Activated B cell treated with CpG ODN at 0.5 μM for 24 hours (primary cell): ENCODE measurements at regions of chr9 and their contacts with region 1.

Region 1: DNA sequence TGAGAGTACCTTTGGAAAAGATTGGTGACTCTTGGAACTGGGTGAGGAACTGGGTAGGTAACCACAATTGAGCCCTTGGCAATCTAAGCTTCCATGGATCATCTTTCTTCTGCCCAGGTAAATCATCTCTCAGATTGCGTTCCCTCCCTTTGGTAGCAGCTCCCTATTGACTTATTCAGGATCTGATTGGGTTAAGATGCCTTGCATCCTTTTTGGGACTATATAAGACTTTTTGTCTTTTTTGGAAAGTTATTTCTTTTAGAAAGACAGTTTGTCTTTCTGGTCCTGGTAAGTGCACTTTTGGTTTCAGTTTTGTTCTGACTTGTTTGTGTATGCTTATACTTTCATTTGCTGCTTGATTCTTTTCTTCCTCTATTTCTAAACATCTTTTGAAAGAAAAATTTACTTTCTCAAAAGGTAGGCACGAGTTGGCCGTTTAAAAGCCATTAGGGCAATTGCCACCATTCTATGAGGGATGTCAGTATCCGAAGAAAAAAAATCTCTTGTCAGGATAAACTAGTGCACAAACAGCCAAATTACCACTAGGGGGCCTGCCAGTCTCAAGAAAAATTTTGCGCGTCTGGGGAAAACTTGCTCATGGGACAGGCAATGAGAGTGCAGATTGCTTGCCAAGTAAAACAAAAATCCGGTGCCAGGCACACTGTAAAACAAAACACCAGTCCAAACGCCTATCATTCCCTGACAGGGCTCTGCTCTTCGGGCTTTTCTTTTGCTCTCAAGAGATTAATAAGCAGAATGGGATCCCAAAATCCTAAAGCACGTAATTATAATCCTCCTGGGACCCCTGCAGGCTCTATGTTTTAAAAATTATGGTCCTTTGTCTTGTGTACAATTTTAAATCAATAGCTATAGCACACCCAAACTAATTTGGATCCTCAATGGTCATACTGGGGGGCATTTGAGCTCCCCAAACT is 12.8 kb downstream of the OR1J1 start:
- DNase-seq: peak; percentile 19
- ATAC-seq: peak; percentile 81
- H3K4me3 Mint-ChIP-seq: peak overlapping the region; percentile 84
- H3K27ac Mint-ChIP-seq: peak overlapping the region; percentile 70
- H3K4me1 Mint-ChIP-seq: peaks cover 14% of the 10 kb centered on the region
- H3K27me3 Mint-ChIP-seq: peaks cover 32% of the 10 kb centered on the region
- CTCF ChIP-seq: peak; percentile 28

Region 2: DNA sequence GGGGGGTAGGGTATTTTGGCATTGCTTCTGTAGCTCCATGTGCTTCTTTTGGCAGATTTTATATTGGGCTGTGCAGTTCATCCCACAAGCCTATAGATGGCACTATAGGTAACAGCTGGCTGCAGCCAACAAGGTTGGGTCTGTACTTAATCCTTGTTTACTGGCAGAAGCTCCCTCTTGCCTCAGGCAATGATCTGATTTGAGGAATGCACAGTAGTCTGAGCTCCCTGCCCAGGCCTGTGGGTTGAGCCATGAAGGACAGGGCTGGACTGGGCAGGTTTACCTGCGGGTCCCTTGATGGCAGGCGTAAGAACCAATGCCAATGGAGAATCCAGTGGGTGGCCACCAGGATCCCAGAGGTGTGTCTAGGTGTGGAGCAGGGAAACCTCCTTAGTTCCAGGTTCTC is 34.0 kb after region 1 on chr9:
- CTCF ChIA-PET with region 1: no interaction called
- POLR2A ChIA-PET with region 1: no interaction called
- intact Hi-C with region 1: no loop called
- DNase-seq: no peak
- ATAC-seq: peak; percentile 52
- H3K4me3 Mint-ChIP-seq: no peak overlapping the region
- H3K27ac Mint-ChIP-seq: no peak overlapping the region
- H3K4me1 Mint-ChIP-seq: no peaks in the 10 kb centered on the region
- H3K27me3 Mint-ChIP-seq: peaks cover 40% of the 10 kb centered on the region
- CTCF ChIP-seq: no peak

Region 3: DNA sequence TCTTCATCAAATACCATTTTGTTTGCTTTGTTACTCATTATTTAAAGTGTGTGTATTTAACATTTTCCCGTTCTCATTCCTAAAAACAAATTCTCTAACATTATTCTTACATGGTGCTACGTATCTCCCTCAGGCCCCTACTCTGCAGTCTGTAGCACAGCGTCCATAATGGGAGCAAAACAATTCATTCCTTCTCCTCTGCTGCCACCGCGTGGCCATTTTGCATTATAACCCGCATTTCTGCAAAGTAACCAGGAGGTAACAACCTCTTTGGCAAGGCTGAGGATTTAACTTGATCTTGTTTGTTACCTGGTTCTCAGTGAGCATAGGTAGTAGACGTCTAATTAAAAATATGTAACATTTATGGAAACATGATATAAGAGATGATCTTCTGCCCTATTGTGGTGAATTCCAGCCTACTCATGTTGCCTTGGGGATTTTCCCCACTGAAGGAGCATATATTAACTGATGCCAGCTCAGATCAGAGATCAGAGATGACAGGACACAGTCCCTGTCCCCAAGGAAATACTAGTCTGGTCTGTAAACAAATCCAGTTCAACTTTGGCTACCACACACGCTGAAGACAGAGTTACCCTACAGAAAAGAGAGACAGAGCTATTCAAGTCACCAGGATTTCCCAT is 345.5 kb after region 1 on chr9:
- CTCF ChIA-PET with region 1: interaction called, 22 read pairs
- POLR2A ChIA-PET with region 1: no interaction called
- intact Hi-C with region 1: loop called (anchors 1 kb)
- DNase-seq: peak; percentile 54
- ATAC-seq: peak; percentile 88
- H3K4me3 Mint-ChIP-seq: no peak overlapping the region
- H3K27ac Mint-ChIP-seq: no peak overlapping the region
- H3K4me1 Mint-ChIP-seq: peaks cover 9% of the 10 kb centered on the region
- H3K27me3 Mint-ChIP-seq: no peaks in the 10 kb centered on the region
- CTCF ChIP-seq: no peak

Region 4: DNA sequence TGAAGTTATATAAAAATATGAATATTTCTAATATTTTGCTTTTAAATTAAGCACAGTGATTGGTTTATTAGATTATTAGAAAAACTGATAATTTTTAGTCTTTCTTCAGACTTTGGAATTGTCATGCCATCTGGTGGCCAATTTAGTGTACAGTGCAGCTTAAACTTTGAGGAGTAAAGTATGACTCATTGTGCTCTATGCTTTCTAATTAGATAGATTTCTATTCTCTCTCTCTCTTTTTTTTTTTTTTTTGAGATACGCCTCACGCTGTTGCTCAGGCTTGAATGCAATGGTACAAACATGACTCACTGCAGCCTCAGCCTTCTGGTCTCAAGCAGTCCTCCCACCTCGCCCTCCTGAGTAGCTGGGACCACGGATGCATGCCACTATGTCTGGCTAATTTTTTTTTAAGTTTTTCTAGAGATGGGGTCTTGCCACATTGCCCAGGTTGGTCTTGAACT is 526.5 kb after region 1 on chr9:
- CTCF ChIA-PET with region 1: interaction called, 7 read pairs
- POLR2A ChIA-PET with region 1: no interaction called
- intact Hi-C with region 1: loop called (anchors 1 kb)
- DNase-seq: no peak
- ATAC-seq: peak; percentile 95
- H3K4me3 Mint-ChIP-seq: no peak overlapping the region
- H3K27ac Mint-ChIP-seq: no peak overlapping the region
- H3K4me1 Mint-ChIP-seq: peaks cover 4% of the 10 kb centered on the region
- H3K27me3 Mint-ChIP-seq: no peaks in the 10 kb centered on the region
- CTCF ChIP-seq: no peak

Region 5: DNA sequence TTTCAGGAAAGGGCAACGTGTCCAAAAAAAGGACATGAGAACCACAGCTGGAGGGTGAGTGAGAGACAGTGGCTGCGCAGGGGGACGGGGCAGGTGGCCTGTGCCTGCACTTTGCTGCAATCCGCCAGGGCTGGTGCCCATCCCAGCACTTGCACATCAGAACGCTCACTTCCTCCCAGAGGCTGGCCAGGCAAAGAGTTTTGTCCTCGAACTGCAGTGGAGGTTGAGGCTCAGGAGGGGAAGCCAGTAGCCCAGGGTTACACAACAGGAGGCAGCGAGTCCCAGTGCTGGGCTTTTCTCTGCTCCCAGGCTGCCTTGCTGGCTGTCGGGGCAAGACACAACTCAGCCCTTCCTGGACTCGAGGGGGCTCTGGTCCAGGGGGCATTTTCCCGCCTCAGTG is 924.2 kb after region 1 on chr9:
- CTCF ChIA-PET with region 1: no interaction called
- POLR2A ChIA-PET with region 1: no interaction called
- intact Hi-C with region 1: loop called (anchors 10 kb)
- DNase-seq: no peak
- ATAC-seq: no peak
- H3K4me3 Mint-ChIP-seq: no peak overlapping the region
- H3K27ac Mint-ChIP-seq: no peak overlapping the region
- H3K4me1 Mint-ChIP-seq: no peaks in the 10 kb centered on the region
- H3K27me3 Mint-ChIP-seq: no peaks in the 10 kb centered on the region
- CTCF ChIP-seq: no peak